Heart left ventricle (tissue), 16 donors: ENCODE measurements at regions of chr5 and their contacts with region 1.

Region 1: GRCh38 chr5:55636683-55637082 is 75.4 kb downstream of the SLC38A9 start:
- DNase-seq: peak in 4 of 5 donors; percentile 44 to 68 (median 50)
- ATAC-seq: peak in 3 of 4 donors; percentile 54 to 61 (median 54)
- H3K4me3 ChIP-seq: no peak overlapping the region
- H3K27ac ChIP-seq: peak overlapping the region; percentile 25 to 87 (median 75)
- H3K4me1 ChIP-seq: peaks cover 7 to 53% (median 42%) of the 10 kb centered on the region in 12 donors
- H3K27me3 ChIP-seq: no peaks in the 10 kb centered on the region
- CTCF ChIP-seq: no peak
- POLR2A ChIP-seq: no peak

Region 2: DNA sequence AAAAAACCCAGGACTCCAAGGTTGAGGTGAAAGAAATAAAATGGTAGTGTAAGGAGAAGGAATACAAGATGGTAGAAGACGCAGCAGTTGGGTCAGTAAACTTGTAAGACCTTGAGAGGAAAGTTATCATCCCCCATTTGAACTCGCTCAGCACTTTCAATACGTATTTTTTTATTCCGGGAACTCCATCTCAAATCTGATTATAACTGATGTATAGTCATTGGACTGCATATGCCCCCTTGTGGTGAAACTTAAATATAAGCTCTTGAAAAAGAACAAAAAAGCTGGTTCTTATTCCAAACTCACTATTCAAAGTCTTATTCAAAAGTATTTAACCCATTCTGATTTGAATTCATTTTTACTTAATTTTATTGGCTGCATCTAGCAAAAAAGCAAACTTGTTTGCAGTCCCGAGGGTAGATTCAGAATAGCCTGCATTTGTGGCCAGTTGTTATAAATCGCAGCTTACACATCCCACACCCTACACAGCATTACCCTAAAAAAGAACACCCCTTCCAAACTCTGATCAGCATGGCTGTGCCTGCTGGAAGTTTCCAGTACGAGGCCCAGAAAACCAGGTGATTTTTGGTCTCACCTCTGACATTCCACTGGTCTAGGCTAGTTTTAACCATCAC is 769.3 kb before region 1 on chr5:
- intact Hi-C with region 1: no loop called
- DNase-seq: no peak
- ATAC-seq: peak in 2 of 4 donors; percentile 36 to 45
- H3K4me3 ChIP-seq: peak overlapping the region in 7 of 12 donors; percentile 4 to 46 (median 19)
- H3K27ac ChIP-seq: no peak overlapping the region
- H3K4me1 ChIP-seq: peaks cover 0 to 7% (median 0%) of the 10 kb centered on the region in 12 donors
- H3K27me3 ChIP-seq: no peaks in the 10 kb centered on the region
- CTCF ChIP-seq: peak; percentile 58 to 78 (median 74)
- POLR2A ChIP-seq: no peak

Region 3: DNA sequence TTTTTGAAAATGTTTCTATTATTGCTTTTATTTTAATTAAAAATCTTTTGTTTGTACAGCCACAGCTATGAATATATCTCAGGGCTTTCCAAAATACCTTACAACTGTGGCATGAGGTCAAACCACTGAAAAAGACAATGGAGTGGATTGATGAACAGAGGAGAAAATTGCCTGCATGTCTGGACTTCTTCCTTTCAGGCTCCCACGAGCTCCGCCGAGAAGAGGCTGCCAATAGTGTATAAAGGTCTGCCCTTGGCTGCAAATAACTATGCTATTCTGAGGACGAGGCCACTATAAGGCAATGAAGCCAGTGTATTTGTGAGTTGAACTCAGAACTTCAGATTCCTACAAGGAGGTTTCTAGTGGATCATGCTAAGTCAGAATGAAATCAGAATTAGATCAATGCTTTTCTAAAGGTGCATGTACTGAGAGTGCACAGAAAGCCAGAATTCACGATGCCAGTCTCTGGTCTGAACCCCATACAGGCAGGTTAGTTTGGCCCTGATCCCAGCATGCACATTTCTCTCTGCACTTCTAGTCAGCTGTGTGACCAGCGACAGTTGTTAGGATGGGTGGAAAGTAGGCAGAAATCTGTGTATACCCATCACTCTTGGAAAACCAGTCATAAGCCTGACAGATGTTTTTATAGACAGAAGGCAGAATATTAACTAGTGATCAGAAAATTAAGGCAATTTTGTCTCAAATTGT is 59.2 kb before region 1 on chr5:
- intact Hi-C with region 1: loop called in 1 of 10 experiments (anchors 2 kb)
- DNase-seq: peak in 4 of 5 donors; percentile 77 to 84 (median 81)
- ATAC-seq: peak; percentile 91 to 94 (median 94)
- H3K4me3 ChIP-seq: no peak overlapping the region
- H3K27ac ChIP-seq: peak overlapping the region; percentile 71 to 90 (median 82)
- H3K4me1 ChIP-seq: peaks cover 6 to 53% (median 48%) of the 10 kb centered on the region in 12 donors
- H3K27me3 ChIP-seq: no peaks in the 10 kb centered on the region
- CTCF ChIP-seq: no peak
- POLR2A ChIP-seq: no peak

Region 4: DNA sequence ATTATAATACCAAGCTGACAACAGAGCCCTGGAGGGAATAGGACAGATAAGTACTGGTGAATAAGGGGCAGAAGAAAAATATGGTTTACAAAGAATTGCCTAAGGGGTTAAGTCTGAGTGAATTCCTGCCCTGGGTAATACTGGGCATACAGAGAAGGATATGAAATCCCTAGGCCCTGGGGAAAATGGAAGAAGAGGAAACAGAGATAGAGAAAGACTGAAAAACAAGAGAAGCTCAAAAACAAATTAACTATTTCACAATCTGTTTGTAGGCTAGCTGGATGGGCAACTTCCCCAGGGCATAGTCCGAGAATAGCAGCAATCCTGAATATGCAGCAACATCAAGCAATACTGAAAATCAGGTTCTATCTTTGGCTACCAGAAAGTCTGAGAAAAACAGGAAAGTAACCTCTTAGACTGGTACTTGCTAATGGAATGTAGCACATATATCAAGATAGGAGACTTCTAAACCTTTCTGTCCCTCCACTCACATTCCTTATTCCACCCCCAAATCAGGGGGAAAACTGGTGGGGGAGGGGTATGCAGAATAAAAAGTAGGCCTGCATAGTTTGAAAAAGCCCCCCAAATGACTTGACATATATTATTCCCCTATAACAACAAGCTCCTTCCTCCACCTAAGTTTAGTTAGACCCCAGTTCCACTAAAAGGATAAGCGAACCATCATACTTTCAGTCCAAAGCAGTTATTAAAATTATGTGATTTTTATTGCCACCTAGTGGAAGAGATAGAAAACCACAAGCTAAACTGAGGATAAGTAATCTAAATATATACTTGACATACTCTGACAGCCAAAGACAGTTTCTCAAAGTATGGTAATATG is 54.8 kb after region 1 on chr5:
- intact Hi-C with region 1: no loop called
- DNase-seq: no peak
- ATAC-seq: peak; percentile 34 to 73 (median 56)
- H3K4me3 ChIP-seq: peak overlapping the region in 3 of 12 donors; percentile 3 to 36 (median 17)
- H3K27ac ChIP-seq: peak overlapping the region in 8 of 12 donors; percentile 8 to 64 (median 34)
- H3K4me1 ChIP-seq: peaks cover 5 to 33% (median 19%) of the 10 kb centered on the region in 12 donors
- H3K27me3 ChIP-seq: no peaks in the 10 kb centered on the region
- CTCF ChIP-seq: peak; percentile 55 to 80 (median 74)
- POLR2A ChIP-seq: no peak